RWPE1 (cell line): ENCODE measurements at regions of chr5 and their contacts with region 1.

Region 1: DNA sequence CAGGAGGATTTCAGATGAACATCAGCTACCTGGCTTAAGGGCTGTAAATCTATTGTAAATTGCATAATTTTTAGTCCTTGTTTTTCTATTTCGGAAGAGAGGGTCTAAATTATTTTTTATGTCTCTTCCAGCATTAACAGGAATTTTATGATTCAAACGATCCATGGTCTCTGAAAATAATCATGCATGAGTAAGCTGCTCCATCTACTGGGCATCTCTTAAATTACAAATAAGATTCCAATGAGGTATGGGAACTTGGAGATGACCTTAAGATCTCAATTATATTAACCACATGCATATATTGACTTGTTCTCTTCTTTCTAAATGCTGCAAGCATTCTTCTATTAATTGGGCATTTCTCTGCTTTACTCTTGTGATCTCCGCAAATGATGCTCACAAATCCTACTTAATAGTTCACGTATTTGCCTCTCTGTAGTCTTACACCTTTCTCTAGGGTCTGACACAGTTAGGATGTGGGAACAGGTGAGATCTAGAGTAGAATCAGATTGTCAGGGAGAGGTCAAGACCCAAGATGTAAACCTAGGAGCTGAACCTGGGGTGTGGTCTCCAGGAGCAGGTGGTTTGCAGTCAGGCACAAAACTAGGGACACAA is 86.9 kb downstream of the NUDT12 start:
- DNase-seq: peak; percentile 55
- H3K27ac ChIP-seq: no peak overlapping the region
- CTCF ChIP-seq: peak; percentile 81

Region 2: DNA sequence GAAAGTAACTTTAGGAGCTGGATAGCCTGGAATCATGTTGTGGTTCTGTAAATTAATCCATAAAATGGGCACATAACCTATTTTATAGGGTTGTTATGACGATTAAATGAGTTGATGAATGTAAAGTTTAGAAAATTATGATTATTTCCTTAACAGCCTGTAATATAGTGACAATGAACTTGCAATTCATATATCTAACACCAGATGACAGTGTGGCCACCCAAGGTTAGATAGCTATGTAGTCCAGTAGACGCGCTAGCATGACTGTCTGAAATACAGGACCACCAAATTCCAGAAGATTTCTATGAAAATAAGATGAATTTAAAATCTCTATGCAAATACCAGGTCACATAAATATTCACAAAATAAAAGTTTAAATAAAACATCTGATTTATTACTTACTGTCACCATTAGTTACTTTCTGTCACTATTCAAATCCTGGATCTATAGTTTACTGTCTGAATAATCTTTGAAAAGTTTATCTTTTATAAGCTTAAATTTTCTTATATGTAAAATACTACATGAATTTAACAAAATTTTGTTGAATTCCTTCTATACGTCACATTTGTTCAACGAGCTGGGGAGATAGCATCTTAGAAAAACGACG is 243.2 kb before region 1 on chr5:
- CTCF ChIA-PET with region 1: interaction called, 18 read pairs
- POLR2A ChIA-PET with region 1: no interaction called
- DNase-seq: peak; percentile 33
- H3K27ac ChIP-seq: no peak overlapping the region
- CTCF ChIP-seq: peak; percentile 81